ENCODE measurements at regions of chr7 and their contacts with region 1.

Region 1: GRCh38 chr7:74535951-74536356 is 82.2 kb downstream of the GTF2IRD1 start:
- DNase-seq: peak in 2 of 5 donors; percentile 39 to 48
- ATAC-seq: peak; percentile 10 to 38 (median 28)
- H3K4me3 ChIP-seq: no peak overlapping the region
- H3K27ac ChIP-seq: peak overlapping the region in 11 of 12 donors; percentile 38 to 90 (median 68)
- H3K4me1 ChIP-seq: peaks cover 0 to 19% (median 6%) of the 10 kb centered on the region in 12 donors
- H3K27me3 ChIP-seq: no peaks in the 10 kb centered on the region
- CTCF ChIP-seq: no peak
- POLR2A ChIP-seq: no peak

Region 2: DNA sequence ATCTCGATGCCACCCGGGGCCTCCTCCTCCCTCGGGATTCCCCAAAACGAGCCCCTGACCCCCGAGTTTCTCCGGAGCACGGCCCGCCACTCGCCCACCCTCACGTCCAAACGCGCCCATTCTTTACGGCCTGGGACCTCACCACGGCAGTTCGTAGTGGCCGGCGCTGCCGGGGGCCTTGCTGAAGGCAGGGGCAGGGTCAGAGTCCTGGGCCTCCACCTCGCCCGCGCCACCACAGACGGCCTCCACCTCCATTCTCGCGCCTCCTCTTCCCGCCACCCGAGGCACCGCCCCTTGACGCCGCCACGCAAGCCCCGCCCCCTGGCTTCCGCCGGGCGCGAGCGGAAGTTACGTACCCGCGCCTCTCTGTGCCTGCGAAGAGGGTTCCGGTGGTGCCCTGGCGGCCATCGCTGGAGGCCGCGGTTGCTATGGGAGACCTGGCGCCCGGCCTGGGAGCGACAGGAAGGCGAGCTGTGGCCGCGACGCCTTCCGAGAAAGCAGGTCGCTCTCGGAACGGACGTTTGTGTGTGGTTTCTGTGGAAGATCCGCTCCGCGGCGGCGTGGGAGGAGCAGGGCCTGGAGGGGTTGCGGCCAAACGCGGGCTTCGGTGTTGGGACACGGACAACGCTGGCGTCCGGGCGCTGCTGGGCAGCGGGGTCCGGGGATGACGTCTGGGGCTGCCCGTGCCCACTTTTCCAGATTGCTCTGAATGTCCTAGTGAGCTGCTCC is 281.7 kb before region 1 on chr7 and contains the start of gene RFC2:
- intact Hi-C with region 1: no loop called
- DNase-seq: peak; percentile 97 to 99 (median 98)
- ATAC-seq: peak; percentile 98 to 100 (median 100)
- H3K4me3 ChIP-seq: peak within 1 kb of the TSS; percentile 64 to 98 (median 81)
- H3K27ac ChIP-seq: peak within 1 kb of the TSS; percentile 80 to 99 (median 95)
- H3K4me1 ChIP-seq: peaks cover 0 to 38% (median 24%) of the 10 kb centered on the region in 12 donors
- H3K27me3 ChIP-seq: no peaks in the 10 kb centered on the region
- CTCF ChIP-seq: peak in 11 of 12 donors; percentile 9 to 47 (median 27)
- POLR2A ChIP-seq: peak in 1 of 2 donors; percentile 64
- total RNA-seq, gene RFC2: 7.8 to 20.9 (median 12.2) TPM

Region 3: DNA sequence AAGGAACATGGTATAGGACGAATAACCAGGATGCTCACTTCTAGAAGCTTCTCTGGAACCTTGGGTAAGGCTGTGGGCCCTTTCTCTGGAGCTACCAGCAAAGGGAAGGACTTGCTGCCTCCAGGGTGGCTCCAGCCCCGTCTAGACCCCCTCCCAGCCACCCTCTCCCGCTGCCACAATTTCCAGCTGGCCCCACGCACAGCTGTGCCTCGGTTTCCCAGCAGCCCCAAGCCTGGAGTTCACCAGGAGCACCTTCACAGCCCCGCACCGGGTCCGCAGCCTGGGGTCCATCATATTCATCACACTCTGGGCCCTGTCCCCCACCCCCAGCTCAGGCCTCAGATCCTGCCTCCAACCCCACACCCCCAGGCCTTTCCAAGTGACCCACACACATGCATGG is 117.9 kb before region 1 on chr7:
- intact Hi-C with region 1: no loop called
- DNase-seq: peak in 1 of 5 donors; percentile 37
- ATAC-seq: peak in 2 of 4 donors; percentile 21 to 34
- H3K4me3 ChIP-seq: no peak overlapping the region
- H3K27ac ChIP-seq: no peak overlapping the region
- H3K4me1 ChIP-seq: peaks cover 0 to 6% (median 0%) of the 10 kb centered on the region in 12 donors
- H3K27me3 ChIP-seq: peaks cover 0 to 4% (median 0%) of the 10 kb centered on the region in 9 donors
- CTCF ChIP-seq: no peak
- POLR2A ChIP-seq: no peak

Region 4: DNA sequence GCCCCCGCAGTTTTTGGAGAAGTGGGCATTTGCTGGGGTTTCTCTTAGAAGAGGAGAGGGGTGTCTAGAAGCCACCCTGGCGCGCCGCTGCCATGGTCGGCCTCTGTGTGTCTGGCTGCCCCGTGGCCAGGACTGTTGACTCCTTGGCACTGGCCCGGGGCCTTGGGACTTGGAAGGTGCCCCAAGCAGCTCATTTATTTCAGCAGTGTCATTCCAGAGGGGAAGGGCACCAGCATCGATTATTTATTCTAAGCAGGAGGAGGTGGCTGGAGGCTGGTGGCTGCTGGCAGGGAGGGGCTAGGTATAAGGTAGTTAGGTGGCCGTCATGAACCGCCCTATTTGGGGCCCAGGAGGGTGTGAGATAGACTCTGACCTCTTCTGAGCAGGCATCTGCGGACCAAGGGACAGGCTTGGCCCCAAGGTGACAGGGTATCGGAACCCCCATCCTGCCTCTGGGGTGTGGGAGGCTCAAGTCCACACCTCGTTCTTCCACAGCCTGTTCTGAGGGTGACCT is 80.6 kb before region 1 on chr7:
- intact Hi-C with region 1: loop called in 3 of 10 experiments (anchors 5 to 10 kb)
- DNase-seq: peak; percentile 35 to 68 (median 63)
- ATAC-seq: peak; percentile 61 to 69 (median 66)
- H3K4me3 ChIP-seq: peak overlapping the region; percentile 66 to 97 (median 78)
- H3K27ac ChIP-seq: peak overlapping the region; percentile 68 to 97 (median 86)
- H3K4me1 ChIP-seq: peaks cover 0 to 30% (median 13%) of the 10 kb centered on the region in 12 donors
- H3K27me3 ChIP-seq: peaks cover 0 to 3% (median 0%) of the 10 kb centered on the region in 9 donors
- CTCF ChIP-seq: no peak
- POLR2A ChIP-seq: peak in 1 of 2 donors; percentile 65

Region 5: GRCh38 chr7:74502181-74502891 is 33.6 kb before region 1 on chr7:
- intact Hi-C with region 1: loop called in 2 of 10 experiments (anchors 2 to 5 kb)
- DNase-seq: peak; percentile 47 to 80 (median 62)
- ATAC-seq: peak; percentile 49 to 66 (median 55)
- H3K4me3 ChIP-seq: no peak overlapping the region
- H3K27ac ChIP-seq: peak overlapping the region in 11 of 12 donors; percentile 16 to 90 (median 71)
- H3K4me1 ChIP-seq: peaks cover 0 to 24% (median 7%) of the 10 kb centered on the region in 12 donors
- H3K27me3 ChIP-seq: no peaks in the 10 kb centered on the region
- CTCF ChIP-seq: no peak
- POLR2A ChIP-seq: no peak

Measured in heart left ventricle (tissue), 16 donors.